Calu3 (cell line): ENCODE measurements at regions of chr11 and their contacts with region 1.

Region 1: GRCh38 chr11:32893343-32894148 is 935 bp downstream of the QSER1 start:
- DNase-seq: peak; percentile 70
- H3K4me3 Mint-ChIP-seq: peak overlapping the region; percentile 95
- H3K27ac Mint-ChIP-seq: peak overlapping the region; percentile 91
- H3K4me1 Mint-ChIP-seq: peaks cover 13% of the 10 kb centered on the region
- H3K27me3 Mint-ChIP-seq: no peaks in the 10 kb centered on the region
- CTCF ChIP-seq: peak; percentile 25

Region 2: DNA sequence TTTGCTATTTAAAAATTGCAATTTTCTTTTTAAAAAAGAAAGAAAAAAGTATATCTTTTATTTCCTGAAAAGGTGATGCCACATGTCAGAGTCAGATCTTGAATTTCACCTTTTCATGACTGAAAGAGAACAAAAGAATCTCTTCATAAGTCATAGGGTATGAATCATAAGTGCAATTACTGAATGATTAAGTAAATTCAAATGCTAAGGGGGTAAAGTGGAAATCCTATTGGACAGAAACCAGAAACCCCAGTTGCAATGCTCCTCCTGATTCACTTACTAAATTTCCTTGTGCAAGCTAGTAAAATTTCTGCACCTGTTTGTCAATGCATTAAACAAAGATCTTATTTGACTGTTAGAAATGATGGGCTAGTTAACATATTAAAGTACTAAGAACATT is 72.0 kb before region 1 on chr11:
- CTCF ChIA-PET with region 1: no interaction called
- intact Hi-C with region 1: loop called (anchors 5 kb)
- DNase-seq: peak; percentile 33
- H3K4me3 Mint-ChIP-seq: peak overlapping the region; percentile 31
- H3K27ac Mint-ChIP-seq: peak overlapping the region; percentile 74
- H3K4me1 Mint-ChIP-seq: peaks cover 37% of the 10 kb centered on the region
- H3K27me3 Mint-ChIP-seq: no peaks in the 10 kb centered on the region
- CTCF ChIP-seq: no peak

Region 3: GRCh38 chr11:33015621-33016551 is 122.3 kb after region 1 on chr11 and contains the start of gene DEPDC7:
- CTCF ChIA-PET with region 1: no interaction called
- intact Hi-C with region 1: no loop called
- DNase-seq: peak; percentile 91
- H3K4me3 Mint-ChIP-seq: peak within 1 kb of the TSS; percentile 87
- H3K27ac Mint-ChIP-seq: peak within 1 kb of the TSS; percentile 26
- H3K4me1 Mint-ChIP-seq: no peaks in the 10 kb centered on the region
- H3K27me3 Mint-ChIP-seq: no peaks in the 10 kb centered on the region
- CTCF ChIP-seq: no peak
- total RNA-seq, gene DEPDC7: 1.2 and 1.6 TPM in 2 replicates